ENCODE measurements at regions of chr19 and their contacts with region 1.

Region 1: DNA sequence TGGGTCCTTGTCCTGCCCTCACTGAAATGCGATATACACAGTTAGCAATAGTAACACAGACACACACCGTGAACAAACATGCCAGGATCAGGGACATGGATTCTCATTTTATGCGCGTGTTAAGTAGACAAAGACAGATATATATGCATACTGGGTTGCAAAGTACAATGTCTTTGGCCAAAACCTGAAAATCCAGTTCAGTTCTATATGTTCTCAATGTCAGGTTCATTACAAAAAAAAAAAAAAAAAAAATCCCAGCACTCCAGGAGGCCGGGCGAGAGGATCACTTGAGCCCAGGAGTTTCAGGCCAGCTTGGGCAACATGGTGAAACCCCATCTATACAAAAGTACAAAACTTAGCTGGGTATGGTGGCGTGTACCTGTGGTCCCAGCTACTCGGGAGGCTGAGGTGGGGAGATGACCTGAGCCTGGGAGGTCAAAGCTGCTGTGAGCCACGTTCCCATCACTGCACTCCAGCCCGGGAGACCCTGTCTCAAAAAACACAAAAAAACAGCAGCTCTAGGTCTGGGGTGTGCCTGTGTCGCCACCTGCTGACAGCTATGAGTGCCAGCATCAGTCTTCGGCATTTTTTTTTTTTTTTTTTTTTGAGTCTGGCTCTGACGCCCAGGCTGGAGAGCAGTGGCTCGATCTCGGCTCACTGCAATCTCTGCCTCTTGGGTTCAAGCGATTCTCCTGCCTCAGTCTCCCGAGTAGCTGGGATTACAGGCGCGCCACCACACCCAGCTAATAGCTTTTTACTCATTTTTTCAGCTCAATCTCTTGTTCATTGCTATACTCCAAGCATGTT is 10.3 kb downstream of the AP2S1 start:
- DNase-seq: peak; percentile 79
- H3K4me3 ChIP-seq: no peak overlapping the region
- H3K27ac ChIP-seq: peak overlapping the region in 7 of 8 donors; percentile 29 to 76 (median 54)
- H3K4me1 ChIP-seq: peaks cover 10 to 47% (median 27%) of the 10 kb centered on the region in 6 donors
- H3K27me3 ChIP-seq: no peaks in the 10 kb centered on the region
- CTCF ChIP-seq: peak; percentile 61 to 91 (median 74)
- POLR2A ChIP-seq: no peak

Region 2: GRCh38 chr19:46756544-46756888 is 83.8 kb before region 1 on chr19:
- intact Hi-C with region 1: loop called (anchors 2 kb)
- DNase-seq: no peak
- H3K4me3 ChIP-seq: no peak overlapping the region
- H3K27ac ChIP-seq: peak overlapping the region in 2 of 8 donors; percentile 14 to 79
- H3K4me1 ChIP-seq: peaks cover 20 to 47% (median 38%) of the 10 kb centered on the region in 6 donors
- H3K27me3 ChIP-seq: no peaks in the 10 kb centered on the region
- CTCF ChIP-seq: no peak
- POLR2A ChIP-seq: no peak

Measured in spleen (tissue), 13 donors.